HepG2 (cell line): ENCODE measurements at regions of chr17 and their contacts with region 1.

Region 1: DNA sequence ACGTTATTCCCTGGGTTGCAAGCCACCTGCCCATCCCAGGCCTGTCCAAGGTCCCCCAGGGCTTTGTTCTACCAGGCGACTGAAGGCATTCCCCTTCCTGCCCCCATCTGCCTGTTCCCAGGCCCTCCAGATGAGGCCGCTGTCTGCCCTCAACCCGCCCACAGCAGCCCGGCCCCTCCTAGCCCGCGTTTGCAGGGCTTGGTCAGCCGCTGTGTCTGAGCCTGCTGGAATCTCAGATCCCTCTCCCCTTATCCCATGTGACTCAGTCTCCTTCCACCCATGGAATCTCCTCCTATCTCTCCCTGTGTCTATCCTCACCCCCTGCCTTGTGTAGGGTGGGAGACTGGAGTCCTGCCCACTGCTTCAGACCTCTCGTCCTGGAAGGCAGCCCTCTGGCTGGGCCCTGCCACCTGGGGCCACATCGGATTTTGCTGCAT is 186.0 kb upstream of the TNRC6C start:
- DNase-seq: peak; percentile 56
- ATAC-seq: peak; percentile 96
- H3K4me3 ChIP-seq: peak overlapping the region in 1 of 3 experiments; percentile 7; a peak in 1 of 6 replicates
- H3K27ac ChIP-seq: no peak overlapping the region
- H3K4me1 ChIP-seq: no peaks in the 10 kb centered on the region
- H3K27me3 ChIP-seq: peaks cover 8 to 78% of the 10 kb centered on the region in 2 experiments
- CTCF ChIP-seq: peak; percentile 92
- EP300 ChIP-seq: no peak
- POLR2A ChIP-seq: no peak
- RAD21 ChIP-seq: peak; percentile 87

Region 2: DNA sequence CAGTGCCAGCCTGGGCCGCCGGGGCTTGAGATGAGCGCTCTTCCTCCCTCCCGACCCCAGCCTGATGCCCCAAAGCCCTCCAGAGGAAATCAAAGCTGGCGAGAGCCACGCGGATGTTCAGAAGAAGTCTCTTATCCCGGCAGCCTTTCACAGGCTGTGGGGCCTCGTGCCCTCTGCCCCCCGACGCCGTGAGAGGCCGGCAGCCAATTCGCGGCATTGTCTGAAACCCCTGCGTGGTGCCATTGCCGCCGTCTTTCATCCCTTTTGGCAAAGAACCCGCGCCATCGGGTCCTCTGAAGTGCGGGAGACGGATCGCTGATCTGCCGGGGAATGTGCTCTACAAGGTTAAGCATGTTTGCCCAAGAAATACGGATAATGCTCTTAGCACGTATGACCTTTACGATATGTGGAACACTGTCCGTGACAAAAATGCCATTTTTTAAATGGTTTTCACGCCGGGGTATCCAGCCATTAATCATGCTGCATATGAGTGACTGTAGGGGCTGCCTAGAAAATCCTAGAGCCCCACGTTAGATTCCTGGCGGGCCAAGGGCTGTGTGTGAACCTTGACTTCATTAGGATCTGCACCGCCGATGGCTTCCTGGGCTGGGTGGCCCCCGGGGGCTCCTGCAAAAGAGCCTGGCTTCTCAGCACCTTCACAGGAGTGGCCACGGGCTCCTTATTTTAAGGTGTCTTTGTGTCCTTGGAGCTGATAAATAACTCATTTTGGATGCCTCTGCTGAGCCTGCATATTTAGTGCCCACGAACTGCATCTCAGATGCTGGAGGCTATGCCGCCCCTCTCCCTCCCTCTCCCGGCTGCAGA is 20.9 kb after region 1 on chr17:
- CTCF ChIA-PET with region 1: no interaction called
- POLR2A ChIA-PET with region 1: no interaction called
- in situ Hi-C with region 1: no loop called
- intact Hi-C with region 1: loop called (anchors 1 kb)
- DNase-seq: no peak
- ATAC-seq: no peak
- H3K4me3 ChIP-seq: no peak overlapping the region
- H3K27ac ChIP-seq: no peak overlapping the region
- H3K4me1 ChIP-seq: no peaks in the 10 kb centered on the region
- H3K27me3 ChIP-seq: peaks cover 39 to 83% of the 10 kb centered on the region in 2 experiments
- CTCF ChIP-seq: no peak
- EP300 ChIP-seq: no peak
- POLR2A ChIP-seq: no peak
- RAD21 ChIP-seq: no peak

Region 3: GRCh38 chr17:77999413-78000173 is 227.1 kb after region 1 on chr17:
- CTCF ChIA-PET with region 1: no interaction called
- POLR2A ChIA-PET with region 1: no interaction called
- in situ Hi-C with region 1: no loop called
- intact Hi-C with region 1: loop called (anchors 10 kb)
- DNase-seq: peak; percentile 21
- ATAC-seq: peak; percentile 43; the same call in 1 of the 3 replicates
- H3K4me3 ChIP-seq: no peak overlapping the region
- H3K27ac ChIP-seq: no peak overlapping the region
- H3K4me1 ChIP-seq: no peaks in the 10 kb centered on the region
- H3K27me3 ChIP-seq: no peaks in the 10 kb centered on the region
- CTCF ChIP-seq: no peak
- EP300 ChIP-seq: no peak
- POLR2A ChIP-seq: no peak
- RAD21 ChIP-seq: no peak